Activated CD4-positive, alpha-beta T cell treated with anti-CD3 and anti-CD28 coated beads, Interleukin-2, amount 10 ng/mL, durations not matched to agents 7 days and 5 days (primary cell): ENCODE measurements at regions of chr7 and their contacts with region 1.

Region 1: DNA sequence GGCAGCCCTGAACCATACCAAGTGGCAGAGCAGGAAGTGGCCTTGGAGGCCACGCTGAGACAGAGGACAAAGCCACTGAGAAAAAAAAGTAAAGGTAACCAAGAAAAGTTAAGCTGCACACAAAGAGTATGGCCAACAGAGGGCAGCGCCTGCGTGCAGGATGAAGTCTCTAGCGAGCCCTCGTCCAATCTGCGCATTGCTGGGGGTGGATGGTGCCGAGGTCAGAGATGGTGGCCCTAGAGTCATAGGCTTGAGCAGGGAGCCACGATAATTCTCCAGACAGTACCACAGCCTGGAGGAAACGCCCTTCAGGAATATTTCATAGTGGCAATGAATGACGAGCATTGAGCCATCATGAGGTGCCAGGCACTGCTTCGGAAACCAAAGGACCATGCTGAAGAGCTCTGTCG is 9.7 kb downstream of the ATP6V0E2 start:
- DNase-seq: peak; percentile 70
- H3K4me3 Mint-ChIP-seq: no peak overlapping the region
- H3K27ac Mint-ChIP-seq: peak overlapping the region; percentile 58
- H3K4me1 Mint-ChIP-seq: peaks cover 14% of the 10 kb centered on the region
- H3K27me3 Mint-ChIP-seq: no peaks in the 10 kb centered on the region

Region 2: DNA sequence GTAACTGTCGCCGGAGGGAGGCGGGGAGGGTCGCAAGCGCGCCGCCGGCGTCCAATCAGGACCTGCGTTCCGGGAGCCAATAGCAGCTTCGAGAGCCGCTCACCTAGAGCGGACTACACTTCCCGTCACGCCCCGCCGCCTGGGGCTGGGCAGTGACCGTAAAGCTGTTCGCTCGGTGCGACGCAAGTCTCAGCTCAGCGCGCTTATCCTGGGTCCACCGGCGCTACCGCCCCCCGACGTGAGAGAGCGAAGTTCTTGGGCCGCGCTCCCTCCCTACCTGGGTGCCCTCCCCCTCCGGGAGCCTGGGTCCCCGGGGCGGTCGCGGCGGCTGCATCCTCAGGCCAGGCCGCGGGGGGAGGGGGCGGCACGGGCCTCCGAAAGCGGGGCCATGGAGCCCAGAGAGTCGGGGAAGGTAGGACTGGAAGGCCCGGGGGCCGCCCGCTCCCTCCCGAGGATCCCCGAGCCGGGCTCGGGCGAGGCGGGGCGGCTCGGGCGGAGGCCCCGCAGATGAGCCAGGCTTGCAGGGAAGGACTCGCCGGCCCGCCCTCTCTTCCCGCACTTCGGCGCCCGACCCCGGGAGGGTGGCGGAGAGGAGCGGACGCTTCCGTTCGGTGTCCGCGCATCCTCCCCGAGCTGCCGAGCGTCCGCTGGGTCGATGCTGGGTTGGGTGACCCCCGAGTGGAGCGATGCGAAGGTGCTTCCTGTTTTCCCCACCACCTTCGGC is 45.1 kb before region 1 on chr7 and contains the start of gene ZNF862:
- CTCF ChIA-PET with region 1: interaction called, 10 read pairs
- POLR2A ChIA-PET with region 1: no interaction called
- DNase-seq: peak; percentile 97
- H3K4me3 Mint-ChIP-seq: peak within 1 kb of the TSS; percentile 80
- H3K27ac Mint-ChIP-seq: peak within 1 kb of the TSS; percentile 87
- H3K4me1 Mint-ChIP-seq: peaks cover 25% of the 10 kb centered on the region
- H3K27me3 Mint-ChIP-seq: peaks cover 7% of the 10 kb centered on the region
- total RNA-seq, gene ZNF862: 31.3 to 35.8 TPM

Region 3: GRCh38 chr7:149872419-149873073 is 10.9 kb before region 1 on chr7:
- CTCF ChIA-PET with region 1: interaction called, 13 read pairs
- POLR2A ChIA-PET with region 1: no interaction called
- DNase-seq: no peak
- H3K4me3 Mint-ChIP-seq: peak overlapping the region; percentile 78
- H3K27ac Mint-ChIP-seq: peak overlapping the region; percentile 82
- H3K4me1 Mint-ChIP-seq: peaks cover 82% of the 10 kb centered on the region
- H3K27me3 Mint-ChIP-seq: no peaks in the 10 kb centered on the region